ENCODE measurements at regions of chr15 and their contacts with region 1.

Region 1: GRCh38 chr15:65323071-65323511 is 18.6 kb downstream of the RNU5B-1 start:
- DNase-seq: peak in 1 of 2 donors; percentile 91
- H3K4me3 ChIP-seq: no peak overlapping the region
- H3K27ac ChIP-seq: peak overlapping the region in 1 of 5 donors; percentile 54
- H3K4me1 ChIP-seq: peaks cover 0 to 13% (median 0%) of the 10 kb centered on the region in 4 donors
- H3K27me3 ChIP-seq: peaks cover 0 to 11% (median 0%) of the 10 kb centered on the region in 3 donors
- CTCF ChIP-seq: no peak
- EP300 ChIP-seq: no peak
- POLR2A ChIP-seq: no peak

Region 2: GRCh38 chr15:65212097-65212496 is 111.0 kb before region 1 on chr15:
- intact Hi-C with region 1: no loop called
- DNase-seq: peak in 1 of 2 donors; percentile 48
- H3K4me3 ChIP-seq: no peak overlapping the region
- H3K27ac ChIP-seq: no peak overlapping the region
- H3K4me1 ChIP-seq: peaks cover 0 to 15% (median 12%) of the 10 kb centered on the region in 4 donors
- H3K27me3 ChIP-seq: no peaks in the 10 kb centered on the region
- CTCF ChIP-seq: peak in 1 of 7 experiments; percentile 19
- EP300 ChIP-seq: no peak
- POLR2A ChIP-seq: no peak

Region 3: DNA sequence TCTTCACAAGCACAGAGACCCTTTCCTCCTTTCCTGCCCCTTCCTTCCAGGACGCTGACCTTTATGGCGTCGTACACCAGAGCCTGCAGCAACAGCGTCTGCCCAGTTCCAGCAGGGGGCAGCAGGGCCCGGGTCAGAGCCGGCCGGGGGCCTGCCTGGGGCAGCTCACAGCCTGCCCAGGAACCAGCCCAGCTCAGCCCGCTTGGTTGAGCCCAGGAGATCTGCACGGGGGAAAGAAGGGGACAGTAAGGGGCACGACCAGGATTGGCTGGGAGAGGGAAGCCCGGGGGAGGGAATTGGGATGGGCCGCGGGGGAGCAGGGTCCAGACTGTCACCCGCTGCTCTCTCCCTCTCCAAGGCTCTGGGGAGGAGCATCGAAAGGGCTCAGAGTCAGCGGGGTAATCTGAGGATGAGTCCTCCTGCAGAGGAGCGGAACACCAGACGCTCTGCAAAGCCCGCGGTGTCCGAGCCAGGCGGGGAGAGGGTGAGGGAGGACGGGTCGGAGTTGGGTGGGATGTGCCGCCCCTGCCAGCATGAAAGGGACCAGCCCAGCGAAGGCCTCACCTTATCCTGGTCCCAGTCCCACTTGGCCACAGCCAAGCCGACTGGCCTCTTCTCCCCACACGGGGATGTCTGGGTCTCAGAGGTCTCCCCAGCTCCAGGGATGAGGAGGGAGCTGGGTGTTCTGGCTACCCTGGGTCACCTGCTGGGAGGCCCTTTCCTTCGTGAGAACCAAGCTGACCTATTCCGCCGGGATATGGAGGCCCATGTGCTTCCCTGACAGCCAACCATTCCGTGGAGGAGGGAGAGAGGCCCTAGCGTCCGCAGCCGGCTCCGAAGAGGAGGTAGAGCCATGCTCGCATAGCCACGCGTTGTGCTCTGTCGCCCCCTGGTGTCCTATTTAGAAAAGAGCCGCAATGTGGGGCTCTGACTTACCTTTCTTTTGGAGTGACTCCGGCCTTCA is 62.1 kb after region 1 on chr15:
- intact Hi-C with region 1: loop called (anchors 5 kb)
- DNase-seq: peak; percentile 89 to 96
- H3K4me3 ChIP-seq: peak overlapping the region; percentile 30 to 46 (median 42)
- H3K27ac ChIP-seq: peak overlapping the region in 4 of 5 donors; percentile 21 to 49 (median 34)
- H3K4me1 ChIP-seq: peaks cover 11 to 20% (median 19%) of the 10 kb centered on the region in 4 donors
- H3K27me3 ChIP-seq: peaks cover 0 to 26% (median 10%) of the 10 kb centered on the region in 3 donors
- CTCF ChIP-seq: peak in 5 of 7 experiments; percentile 82 to 88 (median 84)
- EP300 ChIP-seq: no peak
- POLR2A ChIP-seq: no peak

Measured in stomach (tissue), 19 donors.